Calu3 (cell line): ENCODE measurements at regions of chr2 and their contacts with region 1.

Region 1: GRCh38 chr2:222424729-222425671 is 657 bp downstream of the SGPP2 start:
- DNase-seq: peak; percentile 46
- H3K4me3 Mint-ChIP-seq: peak overlapping the region; percentile 93
- H3K27ac Mint-ChIP-seq: peak overlapping the region; percentile 99
- H3K4me1 Mint-ChIP-seq: peaks cover 35% of the 10 kb centered on the region
- H3K27me3 Mint-ChIP-seq: no peaks in the 10 kb centered on the region
- CTCF ChIP-seq: no peak

Region 2: GRCh38 chr2:222353993-222354392 is 71.0 kb before region 1 on chr2:
- CTCF ChIA-PET with region 1: no interaction called
- intact Hi-C with region 1: loop called (anchors 5 kb)
- DNase-seq: peak; percentile 43
- H3K4me3 Mint-ChIP-seq: no peak overlapping the region
- H3K27ac Mint-ChIP-seq: peak overlapping the region; percentile 27
- H3K4me1 Mint-ChIP-seq: peaks cover 17% of the 10 kb centered on the region
- H3K27me3 Mint-ChIP-seq: no peaks in the 10 kb centered on the region
- CTCF ChIP-seq: no peak

Region 3: GRCh38 chr2:222483513-222484039 is 58.6 kb after region 1 on chr2:
- CTCF ChIA-PET with region 1: interaction called, 3 read pairs
- intact Hi-C with region 1: loop called (anchors 5 kb)
- DNase-seq: peak; percentile 16
- H3K4me3 Mint-ChIP-seq: no peak overlapping the region
- H3K27ac Mint-ChIP-seq: no peak overlapping the region
- H3K4me1 Mint-ChIP-seq: no peaks in the 10 kb centered on the region
- H3K27me3 Mint-ChIP-seq: no peaks in the 10 kb centered on the region
- CTCF ChIP-seq: no peak

Region 4: DNA sequence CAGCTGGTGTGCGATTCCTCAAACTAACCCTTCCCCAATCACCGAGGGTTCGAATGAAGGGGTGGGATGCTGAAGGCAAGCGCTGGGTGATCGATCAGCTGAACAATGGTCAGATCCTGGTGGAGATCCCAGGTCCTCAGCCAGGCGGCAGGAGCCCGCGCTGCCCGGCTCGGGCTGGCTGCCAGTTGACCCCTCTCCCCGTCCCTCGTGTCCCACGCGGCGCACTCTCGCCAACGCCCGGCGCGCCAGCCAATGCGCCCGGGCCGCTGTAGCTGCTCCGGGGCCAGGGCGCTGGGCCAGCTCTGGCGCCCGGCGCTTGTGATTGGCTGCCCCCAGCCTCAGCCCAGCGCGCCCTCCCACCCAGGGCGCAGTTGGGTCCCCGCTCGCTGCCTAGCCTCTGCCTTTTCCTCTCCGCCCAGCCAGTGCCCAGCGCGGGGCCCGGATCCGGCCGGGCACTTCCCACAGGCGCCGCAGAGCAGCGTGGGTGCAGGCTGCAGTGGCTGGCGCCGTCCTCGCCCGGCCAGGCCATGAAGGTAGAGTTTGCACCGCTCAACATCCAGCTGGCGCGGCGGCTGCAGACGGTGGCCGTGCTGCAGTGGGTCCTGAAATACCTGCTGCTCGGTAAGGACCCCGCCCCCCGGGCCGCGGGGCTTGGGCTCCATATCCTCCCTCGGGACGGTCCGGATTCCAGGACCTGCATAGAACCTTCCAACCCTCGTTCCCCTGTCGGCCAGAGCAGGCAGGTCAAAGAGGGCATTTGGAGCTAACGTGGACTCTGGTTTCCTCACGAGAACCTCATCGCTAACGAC is 246.5 kb after region 1 on chr2 and contains the start of gene MOGAT1:
- CTCF ChIA-PET with region 1: no interaction called
- intact Hi-C with region 1: loop called (anchors 5 kb)
- DNase-seq: peak; percentile 94
- H3K4me3 Mint-ChIP-seq: peak within 1 kb of the TSS; percentile 97
- H3K27ac Mint-ChIP-seq: peak within 1 kb of the TSS; percentile 98
- H3K4me1 Mint-ChIP-seq: peaks cover 71% of the 10 kb centered on the region
- H3K27me3 Mint-ChIP-seq: no peaks in the 10 kb centered on the region
- CTCF ChIP-seq: no peak
- total RNA-seq, gene MOGAT1: 35.9 and 51.2 TPM in 2 replicates